PC-3 (cell line): ENCODE measurements at regions of chr19 and their contacts with region 1.

Region 1: GRCh38 chr19:32928806-32929205 is 43.0 kb downstream of the CEP89 start:
- DNase-seq: peak; percentile 80
- ATAC-seq: peak; percentile 93
- H3K4me3 ChIP-seq: no peak overlapping the region
- H3K27ac ChIP-seq: peak overlapping the region; percentile 70
- H3K4me1 ChIP-seq: peaks cover 17% of the 10 kb centered on the region
- H3K27me3 ChIP-seq: no peaks in the 10 kb centered on the region
- CTCF ChIP-seq: no peak

Region 2: GRCh38 chr19:32691291-32691951 is 237.4 kb before region 1 on chr19 and contains the start of gene NUDT19:
- CTCF ChIA-PET with region 1: interaction called, 5 read pairs
- POLR2A ChIA-PET with region 1: no interaction called
- intact Hi-C with region 1: loop called (anchors 5 kb)
- DNase-seq: peak; percentile 76
- ATAC-seq: peak; percentile 92
- H3K4me3 ChIP-seq: peak within 1 kb of the TSS; percentile 90
- H3K27ac ChIP-seq: peak within 1 kb of the TSS; percentile 34
- H3K4me1 ChIP-seq: peaks cover 18% of the 10 kb centered on the region
- H3K27me3 ChIP-seq: no peaks in the 10 kb centered on the region
- CTCF ChIP-seq: no peak
- total RNA-seq, gene NUDT19: 13.3 TPM in 2 replicates

Region 3: DNA sequence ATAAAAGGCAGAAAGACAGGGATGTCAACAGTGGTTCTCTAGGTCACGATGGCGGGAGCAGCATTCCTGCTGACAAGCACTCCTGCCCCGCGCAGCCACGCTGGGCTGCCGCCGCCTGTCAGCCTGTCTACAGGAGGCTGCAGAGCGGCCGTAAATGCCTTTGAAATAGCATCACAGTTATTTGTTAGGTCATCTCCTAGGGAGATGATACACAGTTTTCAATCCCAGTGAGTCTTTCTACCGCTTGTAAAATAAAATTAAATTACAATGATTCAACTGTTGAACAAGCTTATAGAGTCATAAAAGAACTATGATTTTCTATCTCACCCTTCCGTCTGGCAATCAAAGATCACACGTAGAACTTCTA is 51.9 kb before region 1 on chr19:
- CTCF ChIA-PET with region 1: no interaction called
- POLR2A ChIA-PET with region 1: no interaction called
- intact Hi-C with region 1: loop called (anchors 1 kb)
- DNase-seq: peak; percentile 83
- ATAC-seq: peak; percentile 99
- H3K4me3 ChIP-seq: no peak overlapping the region
- H3K27ac ChIP-seq: peak overlapping the region; percentile 81
- H3K4me1 ChIP-seq: peaks cover 13% of the 10 kb centered on the region
- H3K27me3 ChIP-seq: no peaks in the 10 kb centered on the region
- CTCF ChIP-seq: no peak